Activated B cell treated with CpG ODN at 0.5 μM for 24 hours (primary cell): ENCODE measurements at regions of chr5 and their contacts with region 1.

Region 1: DNA sequence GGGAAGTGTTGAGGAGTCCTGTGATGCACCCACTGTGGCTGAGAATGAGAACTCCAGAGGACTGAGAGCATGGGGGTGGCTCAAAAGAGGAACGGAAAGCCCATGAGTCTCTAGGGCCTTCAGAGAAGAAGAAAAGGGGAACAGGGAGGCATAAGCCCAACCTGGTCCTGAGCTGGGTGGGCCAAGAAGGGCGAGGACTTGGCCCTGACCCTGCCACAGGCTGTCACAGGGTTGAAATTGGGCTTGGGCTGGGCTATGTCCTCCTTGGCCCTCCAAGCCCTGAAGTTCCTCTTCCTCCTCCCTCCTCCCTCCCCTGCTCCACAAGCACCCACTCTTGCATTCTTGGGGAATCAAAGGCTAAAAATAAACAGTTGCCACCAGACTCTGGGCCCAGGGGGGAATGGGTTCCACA is 49.3 kb upstream of the PPARGC1B start:
- DNase-seq: peak; percentile 46
- ATAC-seq: peak; percentile 97
- H3K4me3 Mint-ChIP-seq: peak overlapping the region; percentile 28
- H3K27ac Mint-ChIP-seq: peak overlapping the region; percentile 80
- H3K4me1 Mint-ChIP-seq: peaks cover 55% of the 10 kb centered on the region
- H3K27me3 Mint-ChIP-seq: no peaks in the 10 kb centered on the region
- CTCF ChIP-seq: no peak

Region 2: DNA sequence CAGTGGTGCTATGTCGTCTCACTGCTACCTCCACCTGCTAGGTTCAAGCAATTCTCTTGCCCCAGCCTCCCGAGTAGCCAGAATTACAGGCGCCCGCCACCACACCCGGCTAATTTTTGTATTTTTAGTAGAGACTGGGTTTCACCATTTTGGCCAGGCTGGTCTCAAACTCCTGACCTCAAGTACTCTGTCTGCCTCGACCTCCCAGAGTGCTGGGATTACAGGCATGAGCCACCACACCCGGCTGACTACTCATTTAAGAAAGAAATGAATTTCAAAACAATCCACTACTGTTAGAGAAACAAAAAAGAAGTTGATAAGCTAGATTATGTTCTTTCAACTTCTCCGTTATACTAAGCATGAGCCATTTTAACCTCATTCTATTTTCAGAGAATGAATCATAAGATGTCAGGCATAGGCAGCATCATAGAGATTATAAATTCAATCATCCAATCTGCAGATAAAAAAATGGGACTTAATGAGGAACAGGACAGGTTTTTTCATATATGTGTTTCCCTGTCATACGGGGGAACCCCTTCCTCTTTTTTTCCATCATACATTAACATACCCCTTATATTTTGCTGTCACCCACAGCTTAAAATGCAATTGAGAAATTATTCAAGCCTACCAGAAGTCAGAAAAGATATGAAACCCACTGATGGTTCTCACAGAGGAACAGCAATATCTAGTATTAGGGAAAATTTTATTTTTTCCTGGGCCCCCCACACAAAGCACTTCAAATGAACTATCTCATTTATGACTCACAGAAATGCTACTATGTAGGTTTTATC is 880.9 kb before region 1 on chr5:
- CTCF ChIA-PET with region 1: no interaction called
- POLR2A ChIA-PET with region 1: interaction called, 10 read pairs
- intact Hi-C with region 1: no loop called
- DNase-seq: no peak
- ATAC-seq: peak; percentile 58
- H3K4me3 Mint-ChIP-seq: no peak overlapping the region
- H3K27ac Mint-ChIP-seq: no peak overlapping the region
- H3K4me1 Mint-ChIP-seq: peaks cover 28% of the 10 kb centered on the region
- H3K27me3 Mint-ChIP-seq: no peaks in the 10 kb centered on the region
- CTCF ChIP-seq: no peak

Region 3: DNA sequence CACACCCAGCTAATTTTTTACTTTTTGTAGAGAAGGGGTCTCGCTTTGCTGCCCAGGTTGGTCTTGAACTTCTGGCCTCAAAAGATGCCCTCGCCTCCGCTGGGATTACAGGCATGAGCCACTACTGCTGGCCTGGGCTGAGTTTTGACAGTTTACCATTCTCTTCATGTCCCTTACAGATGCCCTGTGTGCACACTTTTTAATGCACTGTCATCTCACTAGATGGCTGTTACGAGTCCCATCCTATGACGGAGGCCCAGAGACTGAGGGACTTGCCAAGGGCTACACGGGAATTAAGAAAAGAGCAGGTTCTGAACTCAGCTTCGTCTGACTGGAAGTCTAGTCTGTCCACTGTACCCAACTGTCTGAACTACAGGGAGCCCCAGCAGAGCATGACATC is 35.6 kb before region 1 on chr5:
- CTCF ChIA-PET with region 1: no interaction called
- POLR2A ChIA-PET with region 1: no interaction called
- intact Hi-C with region 1: no loop called
- DNase-seq: no peak
- ATAC-seq: no peak
- H3K4me3 Mint-ChIP-seq: no peak overlapping the region
- H3K27ac Mint-ChIP-seq: no peak overlapping the region
- H3K4me1 Mint-ChIP-seq: no peaks in the 10 kb centered on the region
- H3K27me3 Mint-ChIP-seq: no peaks in the 10 kb centered on the region
- CTCF ChIP-seq: no peak

Region 4: GRCh38 chr5:149667084-149667828 is 13.6 kb before region 1 on chr5:
- CTCF ChIA-PET with region 1: interaction called, 16 read pairs
- POLR2A ChIA-PET with region 1: no interaction called
- intact Hi-C with region 1: loop called (anchors 1 kb)
- DNase-seq: no peak
- ATAC-seq: peak; percentile 50
- H3K4me3 Mint-ChIP-seq: no peak overlapping the region
- H3K27ac Mint-ChIP-seq: no peak overlapping the region
- H3K4me1 Mint-ChIP-seq: peaks cover 5% of the 10 kb centered on the region
- H3K27me3 Mint-ChIP-seq: no peaks in the 10 kb centered on the region
- CTCF ChIP-seq: peak; percentile 94

Region 5: DNA sequence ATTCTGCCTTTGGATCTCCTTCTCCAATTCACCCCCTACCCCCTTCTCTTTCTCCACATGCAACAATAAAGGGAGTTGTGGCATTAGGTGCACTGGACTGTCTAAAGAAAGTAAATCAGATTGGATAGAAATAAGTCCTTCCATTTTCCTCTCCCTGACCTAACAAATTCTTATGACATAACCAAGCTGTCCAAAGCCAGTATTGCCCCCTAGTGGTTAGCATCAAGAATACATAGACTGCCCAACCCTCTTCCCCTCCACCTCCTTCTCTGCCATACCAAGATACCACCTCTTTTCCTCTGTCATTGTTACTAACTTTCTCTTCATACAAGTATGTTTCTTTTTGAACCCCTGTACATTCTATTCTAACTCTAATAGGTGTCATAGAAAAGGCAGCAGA is 95.0 kb after region 1 on chr5:
- CTCF ChIA-PET with region 1: no interaction called
- POLR2A ChIA-PET with region 1: no interaction called
- intact Hi-C with region 1: loop called (anchors 2 kb)
- DNase-seq: no peak
- ATAC-seq: peak; percentile 29
- H3K4me3 Mint-ChIP-seq: no peak overlapping the region
- H3K27ac Mint-ChIP-seq: no peak overlapping the region
- H3K4me1 Mint-ChIP-seq: peaks cover 52% of the 10 kb centered on the region
- H3K27me3 Mint-ChIP-seq: no peaks in the 10 kb centered on the region
- CTCF ChIP-seq: no peak

Region 6: GRCh38 chr5:150258130-150258529 is 577.3 kb after region 1 on chr5:
- CTCF ChIA-PET with region 1: no interaction called
- POLR2A ChIA-PET with region 1: no interaction called
- intact Hi-C with region 1: no loop called
- DNase-seq: no peak
- ATAC-seq: no peak
- H3K4me3 Mint-ChIP-seq: no peak overlapping the region
- H3K27ac Mint-ChIP-seq: no peak overlapping the region
- H3K4me1 Mint-ChIP-seq: no peaks in the 10 kb centered on the region
- H3K27me3 Mint-ChIP-seq: no peaks in the 10 kb centered on the region
- CTCF ChIP-seq: no peak

Region 7: GRCh38 chr5:151020304-151021110 is 1339.7 kb after region 1 on chr5 and contains the start of gene GPX3:
- CTCF ChIA-PET with region 1: no interaction called
- POLR2A ChIA-PET with region 1: no interaction called
- intact Hi-C with region 1: no loop called
- DNase-seq: peak; percentile 41
- ATAC-seq: peak; percentile 72
- H3K4me3 Mint-ChIP-seq: peak within 1 kb of the TSS; percentile 74
- H3K27ac Mint-ChIP-seq: no peak within 1 kb of the TSS
- H3K4me1 Mint-ChIP-seq: peaks cover 20% of the 10 kb centered on the region
- H3K27me3 Mint-ChIP-seq: no peaks in the 10 kb centered on the region
- CTCF ChIP-seq: no peak
- total RNA-seq, gene GPX3: 0.18 and 0.76 TPM in 2 replicates